Naive thymus-derived CD8-positive, alpha-beta T cell (primary cell): ENCODE measurements at regions of chr11 and their contacts with region 1.

Region 1: DNA sequence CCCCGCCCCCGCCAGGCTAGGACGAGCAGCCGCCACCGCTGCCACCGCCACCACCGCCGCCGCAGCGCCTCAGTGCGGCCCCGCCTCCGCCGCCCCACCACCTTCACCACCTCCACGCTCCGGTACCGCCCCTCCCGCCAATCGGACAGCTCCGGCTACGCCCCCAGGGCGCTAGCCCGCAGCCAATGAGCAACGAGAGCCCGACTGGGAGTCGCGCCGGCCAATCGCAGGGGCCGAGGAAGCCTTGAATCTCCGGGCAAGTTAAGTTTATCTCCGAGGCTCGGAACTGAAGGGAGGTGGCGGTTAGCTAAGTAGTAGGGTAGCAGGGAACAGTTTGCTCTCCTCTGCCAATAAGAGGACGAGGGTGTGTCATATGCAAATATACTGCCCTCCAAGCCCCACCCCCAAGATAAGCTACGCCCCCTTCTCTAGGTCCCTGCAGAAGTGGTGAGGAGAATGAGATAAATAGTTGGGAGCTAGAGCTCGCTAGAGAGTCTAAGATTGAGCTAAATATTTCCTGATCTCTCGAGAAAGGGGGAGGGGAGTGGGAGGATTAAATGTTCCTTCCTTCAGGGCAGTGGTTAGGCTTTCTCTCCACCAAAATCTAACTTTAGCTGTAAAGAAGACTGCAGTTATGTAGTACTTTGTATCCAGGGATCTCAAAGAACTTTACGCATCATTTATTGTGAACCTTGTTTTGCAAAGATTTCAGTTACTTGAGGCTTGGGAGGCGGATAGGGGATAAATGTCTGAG is at the start of gene SESN3:
- DNase-seq: peak; percentile 94 to 99 (median 99)
- ATAC-seq: peak; percentile 88 to 91
- H3K4me3 Mint-ChIP-seq: peak within 1 kb of the TSS in 8 of 10 donors; percentile 89 to 98 (median 94)
- H3K27ac Mint-ChIP-seq: peak within 1 kb of the TSS; percentile 66 to 95 (median 86)
- H3K4me1 Mint-ChIP-seq: peaks cover 8 to 65% (median 32%) of the 10 kb centered on the region in 4 donors
- H3K27me3 Mint-ChIP-seq: no peaks in the 10 kb centered on the region
- polyA plus RNA-seq, gene SESN3: 1.3 to 1.8 (median 1.7) TPM

Region 2: DNA sequence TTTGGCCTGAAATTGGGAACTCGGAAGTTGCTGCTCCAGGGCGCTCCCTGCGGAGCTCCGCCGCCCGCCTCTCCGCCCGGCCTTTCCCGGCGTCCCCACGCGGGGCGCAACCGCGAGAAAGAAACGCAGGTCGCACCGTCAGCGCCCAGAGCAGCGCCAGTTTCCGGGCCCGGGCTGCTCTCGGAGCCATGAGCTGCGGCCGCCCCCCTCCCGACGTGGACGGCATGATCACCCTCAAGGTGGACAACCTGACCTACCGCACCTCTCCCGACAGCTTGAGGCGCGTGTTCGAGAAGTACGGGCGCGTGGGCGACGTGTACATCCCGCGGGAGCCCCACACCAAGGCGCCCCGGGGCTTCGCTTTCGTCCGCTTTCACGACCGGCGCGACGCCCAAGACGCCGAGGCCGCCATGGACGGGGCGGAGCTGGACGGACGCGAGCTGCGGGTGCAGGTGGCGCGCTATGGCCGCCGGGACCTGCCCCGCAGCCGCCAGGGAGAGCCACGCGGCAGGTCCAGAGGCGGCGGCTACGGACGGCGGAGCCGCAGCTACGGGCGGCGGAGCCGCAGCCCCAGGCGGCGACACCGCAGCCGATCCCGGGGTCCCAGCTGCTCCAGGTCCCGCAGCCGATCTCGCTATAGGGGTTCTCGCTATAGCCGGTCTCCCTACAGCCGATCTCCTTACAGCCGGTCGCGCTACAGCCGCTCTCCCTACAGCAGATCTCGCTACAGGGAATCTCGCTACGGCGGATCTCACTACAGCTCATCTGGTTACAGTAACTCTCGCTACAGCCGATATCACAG is 164.1 kb before region 1 on chr11:
- POLR2A ChIA-PET with region 1: interaction called, 37 read pairs
- DNase-seq: peak; percentile 50 to 83 (median 73)
- ATAC-seq: peak; percentile 74 to 75
- H3K4me3 Mint-ChIP-seq: peak overlapping the region; percentile 94 to 100 (median 98)
- H3K27ac Mint-ChIP-seq: peak overlapping the region; percentile 97 to 100 (median 99)
- H3K4me1 Mint-ChIP-seq: peaks cover 10 to 34% (median 29%) of the 10 kb centered on the region in 4 donors
- H3K27me3 Mint-ChIP-seq: no peaks in the 10 kb centered on the region

Region 3: GRCh38 chr11:95150946-95151684 is 80.2 kb before region 1 on chr11:
- POLR2A ChIA-PET with region 1: interaction called, 71 read pairs
- DNase-seq: peak; percentile 81 to 95 (median 90)
- ATAC-seq: peak; percentile 91 to 96
- H3K4me3 Mint-ChIP-seq: peak overlapping the region; percentile 83 to 99 (median 90)
- H3K27ac Mint-ChIP-seq: peak overlapping the region; percentile 85 to 100 (median 96)
- H3K4me1 Mint-ChIP-seq: peaks cover 22 to 45% (median 32%) of the 10 kb centered on the region in 4 donors
- H3K27me3 Mint-ChIP-seq: peaks cover 3 to 11% (median 7%) of the 10 kb centered on the region in 5 donors

Region 4: DNA sequence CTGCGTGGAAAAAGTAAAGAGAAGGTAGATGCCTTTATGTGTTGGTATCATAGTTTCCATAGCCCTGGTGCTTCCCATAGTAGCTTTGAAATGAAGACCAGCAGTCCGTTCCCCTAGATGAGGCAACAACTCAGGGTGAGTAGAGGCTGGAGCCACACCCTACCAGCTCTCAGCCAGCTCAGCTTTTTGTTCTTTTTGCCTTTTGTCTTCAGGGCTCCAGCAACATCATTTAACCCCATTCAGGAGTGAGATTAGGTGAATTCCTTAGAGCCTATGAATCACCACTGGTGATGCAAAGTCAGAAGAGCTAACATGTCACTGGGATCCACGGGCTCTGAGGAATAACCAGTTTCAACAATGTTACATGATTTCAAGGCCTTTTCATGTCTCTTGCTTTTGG is 13.7 kb after region 1 on chr11:
- POLR2A ChIA-PET with region 1: interaction called, 12 read pairs
- DNase-seq: no peak
- ATAC-seq: no peak
- H3K4me3 Mint-ChIP-seq: no peak overlapping the region
- H3K27ac Mint-ChIP-seq: no peak overlapping the region
- H3K4me1 Mint-ChIP-seq: peaks cover 0 to 21% (median 4%) of the 10 kb centered on the region in 4 donors
- H3K27me3 Mint-ChIP-seq: peaks cover 0 to 4% (median 1%) of the 10 kb centered on the region in 5 donors

Region 5: DNA sequence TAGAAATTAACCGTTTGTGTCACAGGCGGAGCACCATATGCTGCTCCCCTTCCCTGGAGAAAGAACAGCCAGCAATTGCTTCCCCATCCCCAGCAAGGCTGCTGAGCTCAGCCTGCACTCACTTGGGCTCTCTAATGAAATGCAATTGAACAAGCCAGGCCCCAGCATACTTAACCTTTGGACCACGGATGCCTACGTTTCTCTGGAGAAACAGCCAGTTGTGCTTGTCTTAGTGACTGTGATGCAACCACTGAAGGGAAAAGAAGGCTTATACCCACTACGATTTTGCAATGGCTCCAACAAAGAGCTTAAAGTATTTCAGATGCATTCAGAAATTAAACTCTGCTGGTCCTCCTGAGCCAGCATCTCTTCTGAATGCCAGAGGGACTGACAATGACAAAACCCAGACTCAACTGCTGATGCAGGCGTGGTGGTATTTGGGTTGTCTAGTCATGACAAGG is 51.0 kb after region 1 on chr11:
- POLR2A ChIA-PET with region 1: no interaction called
- DNase-seq: no peak
- ATAC-seq: no peak
- H3K4me3 Mint-ChIP-seq: no peak overlapping the region
- H3K27ac Mint-ChIP-seq: no peak overlapping the region
- H3K4me1 Mint-ChIP-seq: peaks cover 0 to 19% (median 0%) of the 10 kb centered on the region in 4 donors
- H3K27me3 Mint-ChIP-seq: peaks cover 0 to 3% (median 0%) of the 10 kb centered on the region in 5 donors

Region 6: DNA sequence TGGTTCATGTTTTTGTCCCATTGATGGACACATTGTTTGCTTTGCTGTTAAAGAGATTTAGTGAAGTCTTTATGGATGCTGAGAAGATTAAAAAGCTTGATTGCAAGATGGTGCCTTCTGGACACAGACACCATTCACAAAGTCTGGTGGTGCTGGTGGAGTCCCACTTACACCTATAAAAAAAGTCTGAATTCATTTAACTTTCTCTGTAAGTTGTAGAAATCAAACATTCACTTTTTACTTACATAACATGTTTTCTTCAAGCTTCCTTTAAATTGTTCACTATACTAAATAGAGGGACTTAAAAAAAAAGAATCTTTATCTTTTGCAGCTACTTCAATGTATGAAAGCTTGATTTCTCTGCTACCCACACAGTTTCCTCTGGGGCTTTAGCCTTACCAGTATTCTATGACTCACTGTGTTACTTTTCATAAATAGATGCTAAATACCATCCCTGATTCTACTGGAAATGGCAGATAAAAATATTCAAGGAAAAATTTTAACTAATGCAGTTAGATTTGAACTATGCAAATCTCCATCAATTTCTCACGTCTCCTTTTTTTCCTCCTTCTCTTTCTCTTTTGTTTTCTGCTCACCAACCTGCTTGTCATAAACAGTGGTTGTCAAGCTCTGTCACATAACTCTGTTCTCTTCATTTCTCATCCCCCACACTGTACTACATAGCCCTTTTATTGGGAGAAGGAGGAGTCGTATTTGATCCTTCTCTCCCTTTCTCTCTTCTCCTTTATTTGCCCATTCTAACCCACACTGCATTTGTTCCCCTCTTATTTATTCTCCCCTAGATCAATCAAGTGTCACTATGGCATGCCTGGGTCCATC is 468.5 kb after region 1 on chr11:
- POLR2A ChIA-PET with region 1: interaction called, 42 read pairs
- DNase-seq: peak in 3 of 10 donors; percentile 33 to 58 (median 44)
- ATAC-seq: peak; percentile 74 to 80
- H3K4me3 Mint-ChIP-seq: peak overlapping the region; percentile 44 to 77 (median 66)
- H3K27ac Mint-ChIP-seq: peak overlapping the region; percentile 69 to 98 (median 94)
- H3K4me1 Mint-ChIP-seq: peaks cover 14 to 52% (median 47%) of the 10 kb centered on the region in 4 donors
- H3K27me3 Mint-ChIP-seq: no peaks in the 10 kb centered on the region

Region 7: GRCh38 chr11:95790123-95790932 is 559.0 kb after region 1 on chr11 and contains the start of gene CEP57:
- POLR2A ChIA-PET with region 1: interaction called, 34 read pairs
- DNase-seq: peak in 9 of 10 donors; percentile 74 to 98 (median 93)
- ATAC-seq: peak; percentile 60 to 61
- H3K4me3 Mint-ChIP-seq: peak within 1 kb of the TSS; percentile 99 to 100 (median 100)
- H3K27ac Mint-ChIP-seq: peak within 1 kb of the TSS; percentile 99 to 100 (median 100)
- H3K4me1 Mint-ChIP-seq: peaks cover 24 to 66% (median 61%) of the 10 kb centered on the region in 4 donors
- H3K27me3 Mint-ChIP-seq: peaks cover 0 to 4% (median 0%) of the 10 kb centered on the region in 5 donors
- polyA plus RNA-seq, gene CEP57: 53.0 to 64.2 (median 60.8) TPM